Panc1 (cell line): ENCODE measurements at regions of chr11 and their contacts with region 1.

Region 1: GRCh38 chr11:26878959-26879581 is 114.8 kb upstream of the FIBIN start:
- DNase-seq: no peak
- ATAC-seq: no peak
- H3K4me3 ChIP-seq: no peak overlapping the region
- H3K27ac ChIP-seq: no peak overlapping the region
- H3K4me1 ChIP-seq: no peaks in the 10 kb centered on the region
- H3K27me3 ChIP-seq: no peaks in the 10 kb centered on the region
- CTCF ChIP-seq: no peak

Region 2: GRCh38 chr11:26331911-26332571 is 547.0 kb before region 1 on chr11 and contains the start of gene ANO3:
- CTCF ChIA-PET with region 1: no interaction called
- POLR2A ChIA-PET with region 1: no interaction called
- in situ Hi-C with region 1: no loop called
- intact Hi-C with region 1: loop called (anchors 10 kb)
- DNase-seq: no peak
- ATAC-seq: peak; percentile 97
- H3K4me3 ChIP-seq: peak within 1 kb of the TSS; percentile 27 to 41
- H3K27ac ChIP-seq: no peak within 1 kb of the TSS
- H3K4me1 ChIP-seq: no peaks in the 10 kb centered on the region
- H3K27me3 ChIP-seq: peaks cover 16% of the 10 kb centered on the region
- CTCF ChIP-seq: peak; percentile 74
- total RNA-seq, gene ANO3: not detected

Region 3: GRCh38 chr11:26792941-26793340 is 86.1 kb before region 1 on chr11:
- CTCF ChIA-PET with region 1: no interaction called
- POLR2A ChIA-PET with region 1: no interaction called
- in situ Hi-C with region 1: no loop called
- intact Hi-C with region 1: no loop called
- DNase-seq: no peak
- ATAC-seq: no peak
- H3K4me3 ChIP-seq: no peak overlapping the region
- H3K27ac ChIP-seq: no peak overlapping the region
- H3K4me1 ChIP-seq: no peaks in the 10 kb centered on the region
- H3K27me3 ChIP-seq: no peaks in the 10 kb centered on the region
- CTCF ChIP-seq: no peak